ENCODE measurements at regions of chr7 and their contacts with region 1.

Region 1: GRCh38 chr7:44615149-44615611 is 8.8 kb downstream of the OGDH start:
- DNase-seq: peak; percentile 43
- ATAC-seq: no peak
- H3K4me3 Mint-ChIP-seq: no peak overlapping the region
- H3K27ac Mint-ChIP-seq: peak overlapping the region; percentile 66
- H3K4me1 Mint-ChIP-seq: peaks cover 65% of the 10 kb centered on the region
- H3K27me3 Mint-ChIP-seq: no peaks in the 10 kb centered on the region

Region 2: GRCh38 chr7:44581879-44582603 is 33.1 kb before region 1 on chr7 and contains the start of gene TMED4:
- CTCF ChIA-PET with region 1: interaction called, 4 read pairs
- POLR2A ChIA-PET with region 1: no interaction called
- intact Hi-C with region 1: loop called in 1 of 2 experiments (anchors 1 kb)
- DNase-seq: peak; percentile 100
- ATAC-seq: peak; percentile 95
- H3K4me3 Mint-ChIP-seq: peak within 1 kb of the TSS; percentile 85
- H3K27ac Mint-ChIP-seq: peak within 1 kb of the TSS; percentile 92
- H3K4me1 Mint-ChIP-seq: peaks cover 33% of the 10 kb centered on the region
- H3K27me3 Mint-ChIP-seq: no peaks in the 10 kb centered on the region
- total RNA-seq, gene TMED4: 71.6 to 73.0 TPM

Region 3: DNA sequence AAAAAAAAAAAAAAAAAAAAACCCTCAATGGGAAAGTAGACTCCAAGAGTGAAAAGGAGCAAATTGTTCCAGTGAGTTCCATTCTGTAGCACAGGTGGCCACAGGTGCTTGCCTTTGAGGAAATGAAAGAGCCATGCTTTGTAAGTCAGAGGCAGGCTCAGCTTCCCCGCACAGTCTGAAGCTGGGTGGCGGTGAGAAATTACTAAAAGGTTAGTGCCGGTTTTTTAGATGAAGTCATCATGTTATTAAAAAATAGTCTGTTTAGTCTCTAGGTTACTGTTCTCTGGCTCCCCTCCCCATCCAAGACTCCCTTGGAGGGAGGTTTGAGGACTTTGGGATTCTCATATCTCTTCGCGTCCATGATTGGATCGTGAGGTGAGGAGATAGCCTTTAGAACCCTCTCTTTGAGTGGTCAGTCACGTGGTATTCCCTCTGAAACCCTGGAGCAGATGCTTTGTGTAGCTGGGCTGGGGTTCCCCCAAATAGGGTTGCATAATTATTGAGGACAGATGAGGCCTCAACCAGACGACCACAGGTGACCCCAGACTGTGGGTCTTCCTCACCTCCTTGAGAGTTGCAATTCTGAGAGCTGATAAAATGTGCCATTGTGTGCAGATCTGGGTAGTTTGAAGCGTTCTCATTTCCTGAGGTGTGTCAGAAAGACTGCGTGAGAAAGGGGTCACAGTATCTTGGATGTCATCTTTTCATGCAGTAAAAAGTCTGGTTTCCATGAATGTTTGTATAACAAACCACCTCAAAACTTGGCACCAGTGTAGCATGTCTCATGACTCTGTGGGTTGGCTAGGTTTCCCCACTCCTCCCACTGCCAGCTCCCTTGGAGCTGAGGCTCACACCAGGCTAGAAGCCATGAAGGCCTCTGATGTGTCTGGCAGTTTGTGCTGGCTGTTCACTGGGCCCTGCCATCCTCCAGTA is 18.3 kb after region 1 on chr7:
- CTCF ChIA-PET with region 1: interaction called, 19 read pairs
- POLR2A ChIA-PET with region 1: interaction called, 29 read pairs
- intact Hi-C with region 1: loop called (anchors 1 kb)
- DNase-seq: peak; percentile 72
- ATAC-seq: peak; percentile 57
- H3K4me3 Mint-ChIP-seq: peak overlapping the region; percentile 51
- H3K27ac Mint-ChIP-seq: peak overlapping the region; percentile 93
- H3K4me1 Mint-ChIP-seq: peaks cover 93% of the 10 kb centered on the region
- H3K27me3 Mint-ChIP-seq: no peaks in the 10 kb centered on the region

Region 4: DNA sequence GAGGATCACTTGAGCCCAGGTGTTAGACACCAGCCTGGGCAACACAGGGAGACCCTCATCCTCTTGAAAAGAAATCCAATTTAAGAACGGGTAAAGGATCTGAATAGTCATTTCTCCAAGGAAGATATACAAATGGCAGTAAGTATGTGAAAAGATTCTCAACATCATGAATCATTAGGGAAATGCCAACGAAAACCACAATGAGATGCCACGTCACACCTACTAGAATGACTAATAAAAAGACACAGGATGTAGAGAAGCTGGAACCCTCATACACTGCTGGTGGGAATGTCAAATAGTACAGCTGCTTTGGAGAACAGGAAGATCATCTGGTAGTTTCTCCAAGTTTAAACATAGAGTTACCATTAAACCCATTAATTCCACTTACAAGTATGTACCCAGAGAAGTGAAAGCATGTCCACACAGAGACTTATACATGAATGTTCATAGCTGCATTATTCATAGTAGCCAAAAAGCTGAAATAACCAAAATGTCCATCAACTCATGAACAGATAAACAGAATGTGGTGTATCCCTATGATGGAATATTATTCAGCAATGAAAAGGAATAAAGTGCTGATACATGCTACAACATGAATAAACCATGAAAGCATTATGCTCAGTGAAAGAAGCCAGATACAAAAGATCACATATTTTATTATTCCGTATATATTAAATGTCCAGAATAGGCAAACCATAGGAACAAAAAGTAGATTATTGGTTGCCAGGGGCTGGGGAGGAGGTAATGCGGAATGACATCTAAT is 120.4 kb after region 1 on chr7:
- CTCF ChIA-PET with region 1: no interaction called
- POLR2A ChIA-PET with region 1: interaction called, 11 read pairs
- intact Hi-C with region 1: loop called (anchors 1 kb)
- DNase-seq: peak; percentile 69
- ATAC-seq: peak; percentile 93
- H3K4me3 Mint-ChIP-seq: peak overlapping the region; percentile 6
- H3K27ac Mint-ChIP-seq: peak overlapping the region; percentile 81
- H3K4me1 Mint-ChIP-seq: peaks cover 24% of the 10 kb centered on the region
- H3K27me3 Mint-ChIP-seq: no peaks in the 10 kb centered on the region

Region 5: DNA sequence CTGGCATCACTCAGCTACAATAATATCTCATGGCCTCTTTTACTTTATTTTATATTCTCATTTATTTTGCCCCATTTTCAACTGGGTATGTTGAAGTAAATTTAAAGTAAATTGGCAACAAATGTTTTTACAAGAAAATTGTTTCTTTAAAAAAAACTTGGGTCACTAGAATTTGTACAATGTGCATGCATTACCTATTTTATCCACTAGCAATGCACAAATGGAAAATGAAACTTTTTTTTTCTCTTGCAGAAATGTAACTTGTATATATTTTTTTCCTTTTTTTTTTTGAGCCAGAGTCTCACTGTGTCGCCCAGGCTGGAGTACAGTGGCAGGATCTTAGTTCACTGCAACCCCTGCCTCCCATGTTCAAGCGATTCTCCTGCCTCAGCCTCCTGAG is 243.0 kb after region 1 on chr7:
- CTCF ChIA-PET with region 1: no interaction called
- POLR2A ChIA-PET with region 1: no interaction called
- intact Hi-C with region 1: no loop called
- DNase-seq: no peak
- ATAC-seq: no peak
- H3K4me3 Mint-ChIP-seq: no peak overlapping the region
- H3K27ac Mint-ChIP-seq: no peak overlapping the region
- H3K4me1 Mint-ChIP-seq: peaks cover 18% of the 10 kb centered on the region
- H3K27me3 Mint-ChIP-seq: no peaks in the 10 kb centered on the region

Region 6: DNA sequence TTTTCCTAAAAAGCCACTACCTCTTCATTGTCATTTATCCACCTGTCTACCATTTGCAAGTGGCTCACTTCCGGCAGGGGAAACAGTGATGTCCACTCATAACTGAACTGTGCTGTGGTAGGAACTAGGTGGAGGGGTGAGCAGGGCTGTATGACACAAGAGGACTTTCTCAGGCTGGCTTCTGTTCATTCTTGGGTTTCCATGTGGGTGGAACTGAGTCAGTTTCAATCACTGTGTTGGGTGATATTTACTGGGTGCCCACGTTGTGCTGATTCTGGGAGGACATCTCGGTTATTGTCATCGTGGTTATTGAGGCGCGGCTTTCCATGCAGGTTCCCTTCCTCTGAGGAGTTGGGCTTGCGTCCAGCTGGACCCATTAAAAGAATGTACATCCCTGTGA is 581.2 kb after region 1 on chr7:
- CTCF ChIA-PET with region 1: no interaction called
- POLR2A ChIA-PET with region 1: no interaction called
- intact Hi-C with region 1: loop called in 1 of 2 experiments (anchors 2 kb)
- DNase-seq: peak; percentile 81
- ATAC-seq: peak; percentile 98
- H3K4me3 Mint-ChIP-seq: no peak overlapping the region
- H3K27ac Mint-ChIP-seq: no peak overlapping the region
- H3K4me1 Mint-ChIP-seq: peaks cover 23% of the 10 kb centered on the region
- H3K27me3 Mint-ChIP-seq: peaks cover 26% of the 10 kb centered on the region

Measured in activated CD4-positive, alpha-beta T cell treated with anti-CD3 and anti-CD28 coated beads for 36 hours (primary cell).